ENCODE measurements at regions of chr1 and their contacts with region 1.

Region 1: DNA sequence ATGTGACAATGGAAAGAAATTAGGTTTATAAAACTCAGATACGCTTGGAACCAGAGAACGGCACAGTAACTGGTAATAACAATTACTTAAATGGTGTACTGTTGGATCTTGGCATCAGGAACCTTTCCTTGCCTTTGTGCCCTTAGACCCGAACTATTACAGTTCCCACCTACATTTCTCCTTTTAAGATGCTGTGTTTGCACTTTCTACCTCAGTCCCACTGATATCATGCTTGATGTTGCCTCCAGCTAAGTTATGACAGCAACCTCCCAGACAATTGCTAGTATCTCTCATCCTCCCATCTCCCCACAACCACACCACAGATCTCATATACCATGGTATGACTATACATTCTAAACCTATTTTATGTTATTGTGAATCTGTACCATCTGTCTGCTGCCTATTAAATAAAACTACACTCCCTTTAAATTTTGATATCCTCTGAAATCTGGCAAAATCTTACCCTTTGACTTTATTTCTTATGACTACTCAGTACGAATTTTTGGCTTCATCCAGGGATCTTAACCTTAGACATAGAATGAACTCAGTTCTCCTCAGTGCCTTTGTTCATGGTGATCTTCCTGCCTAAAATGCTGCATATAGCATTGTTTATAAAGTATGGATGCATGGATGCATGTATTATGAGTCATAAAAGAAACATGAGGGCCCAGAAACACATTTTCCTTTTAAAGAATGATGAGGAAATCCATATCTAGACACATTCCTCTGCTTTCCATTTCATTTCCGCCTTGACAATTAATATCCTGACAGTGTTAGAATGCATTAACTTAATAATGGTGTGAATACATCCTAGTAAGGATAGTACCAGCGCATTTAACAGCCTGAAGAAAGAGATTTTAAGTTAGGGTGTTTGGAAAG is 64.1 kb downstream of the LRRC8D start:
- DNase-seq: peak; percentile 64
- ATAC-seq: peak; percentile 38
- H3K4me3 ChIP-seq: no peak overlapping the region
- H3K27ac ChIP-seq: peak overlapping the region; percentile 12
- H3K4me1 ChIP-seq: peaks cover 38% of the 10 kb centered on the region
- H3K27me3 ChIP-seq: no peaks in the 10 kb centered on the region
- CTCF ChIP-seq: no peak

Region 2: DNA sequence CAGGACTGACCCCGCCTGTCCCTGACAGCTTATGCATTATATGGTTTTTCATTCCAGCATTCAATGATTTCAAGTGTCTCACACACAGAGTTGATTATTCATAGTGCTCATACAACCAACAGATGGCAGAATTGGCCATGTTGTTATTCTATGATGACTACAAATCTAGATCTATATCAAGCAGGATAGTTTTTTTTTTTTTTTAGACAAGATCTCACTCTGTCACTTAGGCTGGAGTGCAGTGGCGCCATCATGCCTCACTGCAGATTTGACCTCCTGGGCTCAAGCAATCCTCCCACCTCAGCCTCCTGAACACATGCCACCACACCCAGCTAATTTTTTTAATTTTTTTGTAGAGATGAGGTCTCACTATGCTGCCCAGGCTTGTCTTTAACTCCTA is 104.2 kb before region 1 on chr1:
- CTCF ChIA-PET with region 1: no interaction called
- POLR2A ChIA-PET with region 1: no interaction called
- intact Hi-C with region 1: no loop called
- DNase-seq: peak; percentile 76
- ATAC-seq: peak; percentile 94
- H3K4me3 ChIP-seq: no peak overlapping the region
- H3K27ac ChIP-seq: no peak overlapping the region
- H3K4me1 ChIP-seq: no peaks in the 10 kb centered on the region
- H3K27me3 ChIP-seq: no peaks in the 10 kb centered on the region
- CTCF ChIP-seq: peak; percentile 81

Region 3: DNA sequence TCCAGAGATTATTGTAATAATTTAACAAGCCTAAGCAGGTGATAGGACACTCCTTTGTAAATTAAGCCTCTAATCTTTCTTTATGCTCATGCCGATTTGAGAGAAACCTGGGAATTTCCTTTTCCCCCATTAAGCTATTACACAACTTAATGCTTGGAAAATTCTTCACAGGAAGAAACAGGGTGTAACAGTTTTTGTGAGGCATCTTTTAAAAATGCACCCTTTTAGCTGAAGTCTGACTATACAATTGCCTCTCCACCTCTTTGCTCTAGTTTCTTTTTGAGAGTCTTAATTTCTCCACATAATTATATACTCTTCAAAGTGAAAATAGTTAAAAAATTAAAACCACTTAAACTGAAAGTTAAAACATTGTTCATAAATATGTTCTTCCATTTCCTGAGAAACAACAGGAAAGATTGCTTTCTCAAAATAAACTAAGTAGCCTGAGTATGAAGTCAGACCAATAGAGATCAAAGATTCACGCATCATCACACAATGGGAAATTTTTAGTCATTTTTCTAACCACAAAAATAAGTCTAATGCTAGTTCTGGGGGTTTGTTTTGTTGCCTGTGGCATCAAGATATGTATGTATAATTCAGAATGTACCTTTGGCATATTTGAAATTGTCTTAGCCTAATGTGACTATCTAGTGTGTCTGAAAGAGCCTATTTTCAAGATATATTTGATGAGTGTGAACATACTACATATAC is 29.4 kb before region 1 on chr1:
- CTCF ChIA-PET with region 1: no interaction called
- POLR2A ChIA-PET with region 1: no interaction called
- intact Hi-C with region 1: no loop called
- DNase-seq: peak; percentile 51
- ATAC-seq: no peak
- H3K4me3 ChIP-seq: no peak overlapping the region
- H3K27ac ChIP-seq: peak overlapping the region; percentile 43
- H3K4me1 ChIP-seq: peaks cover 18% of the 10 kb centered on the region
- H3K27me3 ChIP-seq: no peaks in the 10 kb centered on the region
- CTCF ChIP-seq: no peak

Region 4: GRCh38 chr1:89941110-89941770 is 56.3 kb after region 1 on chr1:
- CTCF ChIA-PET with region 1: no interaction called
- POLR2A ChIA-PET with region 1: no interaction called
- intact Hi-C with region 1: no loop called
- DNase-seq: no peak
- ATAC-seq: no peak
- H3K4me3 ChIP-seq: no peak overlapping the region
- H3K27ac ChIP-seq: no peak overlapping the region
- H3K4me1 ChIP-seq: peaks cover 34% of the 10 kb centered on the region
- H3K27me3 ChIP-seq: no peaks in the 10 kb centered on the region
- CTCF ChIP-seq: no peak

Region 5: GRCh38 chr1:89953072-89953626 is 68.2 kb after region 1 on chr1:
- CTCF ChIA-PET with region 1: no interaction called
- POLR2A ChIA-PET with region 1: interaction called, 5 read pairs
- intact Hi-C with region 1: loop called (anchors 5 kb)
- DNase-seq: peak; percentile 95
- ATAC-seq: peak; percentile 96
- H3K4me3 ChIP-seq: no peak overlapping the region
- H3K27ac ChIP-seq: peak overlapping the region; percentile 78
- H3K4me1 ChIP-seq: peaks cover 39% of the 10 kb centered on the region
- H3K27me3 ChIP-seq: no peaks in the 10 kb centered on the region
- CTCF ChIP-seq: peak; percentile 34; the same call in 1 of the 2 replicates